ENCODE measurements at regions of chrX and their contacts with region 1.

Region 1: GRCh38 chrX:150766351-150767044 is 73.3 kb downstream of the MTMR1 start:
- DNase-seq: no peak
- ATAC-seq: peak; percentile 38
- H3K4me3 Mint-ChIP-seq: no peak overlapping the region
- H3K27ac Mint-ChIP-seq: peak overlapping the region; percentile 83
- H3K4me1 Mint-ChIP-seq: peaks cover 17% of the 10 kb centered on the region
- H3K27me3 Mint-ChIP-seq: no peaks in the 10 kb centered on the region
- CTCF ChIP-seq: no peak

Region 2: GRCh38 chrX:150119323-150119722 is 647.2 kb before region 1 on chrX:
- CTCF ChIA-PET with region 1: no interaction called
- POLR2A ChIA-PET with region 1: no interaction called
- DNase-seq: no peak
- ATAC-seq: no peak
- H3K4me3 Mint-ChIP-seq: no peak overlapping the region
- H3K27ac Mint-ChIP-seq: no peak overlapping the region
- H3K4me1 Mint-ChIP-seq: no peaks in the 10 kb centered on the region
- H3K27me3 Mint-ChIP-seq: no peaks in the 10 kb centered on the region
- CTCF ChIP-seq: no peak

Region 3: GRCh38 chrX:151082076-151082948 is 315.8 kb after region 1 on chrX:
- CTCF ChIA-PET with region 1: interaction called, 90 read pairs
- POLR2A ChIA-PET with region 1: no interaction called
- DNase-seq: peak; percentile 66
- ATAC-seq: peak; percentile 84
- H3K4me3 Mint-ChIP-seq: peak overlapping the region; percentile 59
- H3K27ac Mint-ChIP-seq: no peak overlapping the region
- H3K4me1 Mint-ChIP-seq: peaks cover 13% of the 10 kb centered on the region
- H3K27me3 Mint-ChIP-seq: peaks cover 27% of the 10 kb centered on the region
- CTCF ChIP-seq: peak; percentile 50

Measured in WTC11 (cell line).